Posterior vena cava (tissue), 2 donors: ENCODE measurements at regions of chr17 and their contacts with region 1.

Region 1: DNA sequence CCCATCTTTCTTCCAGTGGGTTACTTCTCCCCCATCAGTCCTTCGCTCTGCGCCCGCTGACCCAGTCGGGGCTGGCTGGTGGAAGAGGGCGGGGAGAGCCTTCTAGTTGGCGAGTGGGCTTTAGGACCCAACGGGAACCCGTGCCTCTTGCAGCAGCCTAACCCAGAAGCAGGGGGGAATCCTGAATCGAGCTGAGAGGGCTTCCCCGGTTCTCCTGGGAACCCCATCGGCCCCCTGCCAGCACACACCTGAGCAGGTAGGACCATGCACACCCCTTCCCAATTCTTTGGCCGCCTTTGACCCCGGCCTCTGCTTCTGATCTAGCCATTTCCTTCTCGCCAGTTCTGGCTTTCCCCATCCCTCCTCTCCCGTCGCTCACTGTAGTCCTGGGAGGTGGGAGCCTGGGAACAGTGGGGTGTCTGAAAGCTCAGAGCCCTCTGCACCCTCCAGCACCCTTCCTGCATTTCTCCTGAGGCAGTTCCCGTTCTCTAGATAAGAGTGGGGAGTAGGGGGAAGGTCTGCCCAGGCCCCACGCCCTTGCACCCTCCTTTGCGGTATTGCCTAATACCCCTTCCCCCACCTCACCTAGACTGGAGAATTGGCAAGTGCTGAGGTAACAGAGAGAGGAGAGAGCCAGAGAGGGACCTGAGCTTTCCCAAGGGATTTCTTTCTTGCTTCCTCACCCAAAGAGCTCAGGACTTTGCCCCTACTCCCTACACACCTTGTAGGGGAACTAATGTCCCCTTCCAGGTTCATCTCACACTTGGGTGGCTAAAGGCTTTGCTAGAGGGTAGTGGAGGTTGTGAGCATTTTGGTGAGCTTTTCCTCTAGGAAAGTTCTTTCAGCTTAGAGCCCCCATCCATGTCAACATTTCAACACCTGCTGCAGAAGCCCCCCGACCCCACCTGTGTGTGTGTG is at the start of gene RARA:
- DNase-seq: no peak
- total RNA-seq, gene RARA: 47.5 to 54.5 TPM

Region 2: DNA sequence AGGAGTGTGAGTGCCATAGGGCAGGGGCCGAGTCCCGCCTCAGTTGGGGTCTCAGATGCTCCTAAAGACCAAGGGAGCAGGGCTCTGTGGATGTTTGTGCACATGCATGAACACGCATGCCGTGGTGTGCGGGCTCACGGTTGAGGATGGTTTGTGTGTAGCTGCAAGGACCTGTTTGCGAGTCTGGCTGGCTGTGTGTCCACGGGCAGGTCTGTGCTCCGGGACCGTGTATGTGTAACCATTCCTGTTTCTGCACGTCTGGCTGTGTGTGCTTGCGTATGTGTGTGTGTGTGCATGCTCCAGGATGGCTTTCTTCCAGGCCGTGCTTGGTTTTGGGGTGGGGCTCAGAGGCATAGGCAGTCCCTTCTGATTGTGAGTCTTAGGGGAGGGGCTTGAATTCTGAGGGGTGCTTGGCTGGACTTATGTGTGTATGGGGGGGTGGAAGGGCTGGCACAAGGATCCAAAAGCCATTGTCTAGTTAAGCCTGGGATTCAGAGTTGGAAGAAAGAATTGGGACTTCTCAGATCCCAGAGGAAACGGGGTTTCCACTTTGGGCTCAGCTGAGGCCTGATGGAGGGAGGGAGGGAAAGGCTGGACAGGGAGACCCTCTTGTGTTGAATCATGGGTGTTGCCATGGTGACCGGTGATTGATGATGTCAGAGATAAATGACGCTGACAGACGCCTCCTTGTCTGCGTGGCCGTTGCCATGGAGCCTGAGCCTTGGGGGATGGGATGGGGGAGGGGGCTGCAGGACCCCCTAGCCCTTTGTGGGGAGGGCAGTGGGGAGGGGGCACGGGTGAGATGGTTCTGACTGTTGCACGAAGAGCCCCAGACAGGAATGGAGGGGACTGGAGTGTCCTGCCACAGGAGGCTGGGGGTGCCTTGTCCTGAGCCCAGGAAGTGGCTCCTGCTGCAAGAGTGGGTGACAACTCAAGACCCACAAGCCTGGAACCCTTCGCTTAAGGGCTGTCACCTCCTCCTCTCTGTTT is 40.9 kb after region 1 on chr17:
- intact Hi-C with region 1: loop called (anchors 2 kb)
- DNase-seq: no peak